OCI-LY7 (cell line): ENCODE measurements at regions of chr17 and their contacts with region 1.

Region 1: DNA sequence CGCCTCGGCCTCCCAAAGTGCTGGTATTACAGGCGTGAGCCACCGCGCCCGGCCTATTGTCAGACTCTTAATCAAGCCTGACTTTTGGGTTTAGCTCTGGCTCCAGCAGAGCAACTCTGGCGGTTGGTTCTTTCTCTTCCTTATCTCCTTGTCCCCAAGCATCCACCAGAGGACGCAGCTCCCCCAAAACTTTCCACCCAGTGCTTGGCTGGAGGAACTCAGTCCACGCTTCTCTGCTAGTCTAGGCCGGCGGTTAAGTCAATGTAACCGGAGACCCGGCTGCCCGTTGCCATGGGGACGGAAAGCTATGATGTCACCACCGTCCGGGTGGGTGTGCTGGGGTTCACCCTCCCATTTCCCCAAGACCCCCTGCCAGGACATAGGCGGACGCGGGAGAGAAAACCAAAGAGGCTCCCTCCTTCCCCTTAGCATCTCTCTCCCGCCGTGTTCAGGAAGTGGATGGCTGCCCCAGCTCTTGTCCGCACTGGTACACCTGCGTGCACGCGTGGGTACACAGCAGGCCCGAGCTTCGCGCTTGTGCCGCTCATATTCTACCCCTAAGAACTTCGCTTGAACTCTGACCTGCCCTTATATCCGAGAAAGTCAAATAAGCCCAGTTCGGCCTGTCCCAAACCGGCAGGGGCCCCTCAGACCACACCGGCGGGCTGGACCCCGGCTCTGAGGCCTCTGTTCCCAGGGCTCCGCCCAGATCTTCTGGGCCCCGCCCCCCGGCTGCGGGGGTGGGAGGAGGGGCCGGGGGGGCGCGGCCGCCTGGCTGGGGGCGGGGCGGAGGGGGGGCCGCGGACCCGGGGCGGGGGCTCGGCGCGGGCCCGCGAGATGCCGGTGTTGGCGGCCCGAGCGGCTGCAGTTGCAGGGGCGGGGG is at the start of gene RND2:
- DNase-seq: peak; percentile 93
- H3K4me3 ChIP-seq: peak within 1 kb of the TSS; percentile 67
- H3K27ac ChIP-seq: peak within 1 kb of the TSS; percentile 11
- H3K4me1 ChIP-seq: peaks cover 19% of the 10 kb centered on the region
- CTCF ChIP-seq: peak; percentile 84
- total RNA-seq, gene RND2: not detected in 2 replicates

Region 2: GRCh38 chr17:42493319-42493718 is 531.3 kb before region 1 on chr17:
- CTCF ChIA-PET with region 1: no interaction called
- POLR2A ChIA-PET with region 1: no interaction called
- intact Hi-C with region 1: no loop called
- DNase-seq: no peak
- H3K4me3 ChIP-seq: no peak overlapping the region
- H3K27ac ChIP-seq: no peak overlapping the region
- H3K4me1 ChIP-seq: no peaks in the 10 kb centered on the region
- CTCF ChIP-seq: no peak

Region 3: DNA sequence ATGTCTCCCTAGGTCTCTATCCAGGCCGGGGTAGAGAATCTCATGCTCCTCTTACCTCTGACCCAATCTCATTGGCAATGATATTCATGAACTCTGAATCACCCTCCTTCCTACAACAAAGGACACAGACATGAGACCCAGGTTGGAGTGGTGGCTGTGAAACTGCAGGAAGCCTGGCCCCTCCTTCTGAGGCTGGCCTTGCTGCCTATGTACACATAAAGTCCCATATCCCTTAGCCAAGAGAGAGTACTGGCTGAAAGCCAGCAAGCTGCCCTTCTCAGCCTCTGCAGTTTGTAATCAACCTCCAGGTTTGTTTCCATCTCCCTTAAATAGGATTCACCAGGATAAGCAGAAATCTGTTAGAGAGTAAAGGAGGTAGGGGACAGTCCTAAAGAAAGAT is 71.0 kb before region 1 on chr17:
- CTCF ChIA-PET with region 1: no interaction called
- POLR2A ChIA-PET with region 1: no interaction called
- intact Hi-C with region 1: no loop called
- DNase-seq: no peak
- H3K4me3 ChIP-seq: no peak overlapping the region
- H3K27ac ChIP-seq: no peak overlapping the region
- H3K4me1 ChIP-seq: no peaks in the 10 kb centered on the region
- CTCF ChIP-seq: no peak

Region 4: GRCh38 chr17:43170766-43171585 is 146.3 kb after region 1 on chr17 and contains the start of gene NBR1:
- CTCF ChIA-PET with region 1: no interaction called
- POLR2A ChIA-PET with region 1: no interaction called
- intact Hi-C with region 1: loop called (anchors 1 kb)
- DNase-seq: peak; percentile 99
- H3K4me3 ChIP-seq: peak within 1 kb of the TSS; percentile 82
- H3K27ac ChIP-seq: peak within 1 kb of the TSS; percentile 82
- H3K4me1 ChIP-seq: peaks cover 19% of the 10 kb centered on the region
- CTCF ChIP-seq: peak; percentile 66
- total RNA-seq, gene NBR1: 15.2 and 16.2 TPM in 2 replicates

Region 5: GRCh38 chr17:43211480-43212402 is 187.1 kb after region 1 on chr17 and contains the start of gene TMEM106A:
- CTCF ChIA-PET with region 1: no interaction called
- POLR2A ChIA-PET with region 1: no interaction called
- intact Hi-C with region 1: loop called (anchors 5 kb)
- DNase-seq: peak; percentile 81
- H3K4me3 ChIP-seq: peak within 1 kb of the TSS; percentile 70
- H3K27ac ChIP-seq: peak within 1 kb of the TSS; percentile 71
- H3K4me1 ChIP-seq: peaks cover 32% of the 10 kb centered on the region
- CTCF ChIP-seq: peak; percentile 70
- total RNA-seq, gene TMEM106A: 7.1 and 9.4 TPM in 2 replicates

Region 6: DNA sequence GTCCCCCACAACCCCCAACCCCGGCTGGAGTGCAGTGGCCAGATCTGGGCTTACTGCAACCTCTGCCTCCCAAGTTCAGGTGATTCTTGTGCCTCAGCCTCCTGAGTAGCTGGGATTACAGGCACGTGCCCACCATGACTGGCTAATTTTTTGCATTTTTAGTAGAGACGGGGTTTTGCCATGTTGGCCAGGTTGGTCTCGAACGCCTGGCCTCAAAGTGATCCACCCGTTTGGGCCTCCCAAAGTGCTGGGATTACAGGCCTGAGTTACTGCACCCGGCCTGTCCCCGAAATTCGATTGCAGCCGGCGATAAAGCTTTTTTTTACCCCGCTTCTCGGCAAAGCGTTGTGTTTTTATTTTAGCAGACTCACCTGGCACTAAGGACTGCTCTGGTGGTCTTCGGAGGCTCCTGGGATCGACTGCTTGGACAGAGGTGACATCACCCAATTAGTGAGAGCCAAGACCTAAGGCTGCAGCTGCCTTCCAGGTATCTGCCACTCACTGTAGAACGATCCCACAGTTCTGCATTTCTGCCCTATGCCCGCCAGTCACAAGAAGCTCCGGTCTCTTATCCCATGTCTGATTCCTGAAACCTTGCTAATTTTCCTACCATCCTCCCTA is 292.0 kb after region 1 on chr17:
- CTCF ChIA-PET with region 1: no interaction called
- POLR2A ChIA-PET with region 1: no interaction called
- intact Hi-C with region 1: loop called (anchors 2 kb)
- DNase-seq: peak; percentile 51
- H3K4me3 ChIP-seq: no peak overlapping the region
- H3K27ac ChIP-seq: no peak overlapping the region
- H3K4me1 ChIP-seq: no peaks in the 10 kb centered on the region
- CTCF ChIP-seq: no peak